Sciatic nerve (tissue), 2 donors: ENCODE measurements at regions of chr15 and their contacts with region 1.

Region 1: GRCh38 chr15:62066663-62067447 is at the start of gene C2CD4A:
- DNase-seq: peak; percentile 70
- ATAC-seq: peak; percentile 82
- total RNA-seq, gene C2CD4A: not detected

Region 2: GRCh38 chr15:61871926-61872522 is 194.8 kb before region 1 on chr15:
- intact Hi-C with region 1: loop called (anchors 5 kb)
- DNase-seq: no peak
- ATAC-seq: no peak

Region 3: DNA sequence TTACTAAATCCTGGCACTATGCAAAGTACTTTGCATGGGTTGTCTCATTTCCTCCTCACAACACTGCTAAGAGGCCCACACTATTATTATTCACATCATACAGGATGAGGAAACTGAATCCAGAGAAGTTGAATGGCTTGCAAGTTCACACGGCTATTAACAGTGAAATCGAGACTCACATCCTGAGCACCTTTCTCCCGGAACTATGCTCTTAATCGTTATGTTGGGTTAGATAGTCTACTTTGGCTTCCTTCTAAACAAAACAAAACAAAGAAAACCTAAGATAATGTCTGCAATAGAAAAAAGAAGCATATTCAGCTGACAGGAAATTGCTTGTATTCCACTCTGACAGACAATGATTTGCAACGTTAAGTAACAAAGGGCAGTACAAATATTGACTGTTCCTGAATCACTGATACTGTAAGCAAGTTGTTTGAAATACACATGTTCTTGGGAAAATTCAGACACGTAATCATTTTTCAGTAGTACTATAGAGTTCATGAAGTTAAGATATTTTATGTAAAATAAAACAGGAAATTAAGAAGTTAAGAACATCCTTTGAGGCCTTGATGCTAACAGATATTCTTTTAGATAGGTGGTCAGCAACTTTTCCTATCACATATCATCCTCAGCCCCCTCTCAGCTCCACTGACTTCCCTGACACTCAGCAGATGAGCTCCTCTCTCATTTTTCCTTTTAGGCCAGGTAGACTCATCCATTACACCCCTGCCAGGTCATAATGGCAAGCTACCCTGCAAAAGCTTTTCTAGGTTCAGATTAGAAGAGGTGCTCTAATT is 57.5 kb after region 1 on chr15:
- intact Hi-C with region 1: loop called (anchors 5 kb)
- DNase-seq: no peak
- ATAC-seq: no peak